Vagina (tissue), 2 donors: ENCODE measurements at regions of chr11 and their contacts with region 1.

Region 1: GRCh38 chr11:115334932-115335788 is 169.1 kb downstream of the CADM1 start:
- DNase-seq: no peak
- H3K4me3 ChIP-seq: no peak overlapping the region
- H3K27ac ChIP-seq: no peak overlapping the region
- H3K4me1 ChIP-seq: no peaks in the 10 kb centered on the region
- H3K27me3 ChIP-seq: no peaks in the 10 kb centered on the region
- CTCF ChIP-seq: peak in 2 of 3 experiments; percentile 43 to 55
- POLR2A ChIP-seq: no peak

Region 2: DNA sequence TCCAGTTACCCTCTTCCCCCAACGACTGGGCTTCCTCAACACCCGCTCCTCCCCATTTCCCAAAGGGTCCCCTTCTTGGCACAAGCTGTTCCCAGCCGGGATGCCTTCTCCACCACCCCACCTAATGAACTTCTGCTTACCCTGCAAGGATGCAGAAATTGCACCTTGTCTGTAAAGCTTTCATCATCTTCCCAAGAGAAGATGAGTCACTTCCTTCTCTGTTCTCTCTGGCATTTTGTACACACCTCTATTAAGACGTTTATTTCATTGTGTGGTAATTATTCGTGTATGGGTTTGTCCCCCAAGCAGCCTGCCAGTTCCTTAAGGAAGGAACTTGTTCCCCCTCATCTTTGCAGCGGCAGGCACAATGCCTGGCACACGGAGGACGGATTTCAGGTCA is 182.0 kb before region 1 on chr11:
- intact Hi-C with region 1: no loop called
- DNase-seq: no peak
- H3K4me3 ChIP-seq: no peak overlapping the region
- H3K27ac ChIP-seq: no peak overlapping the region
- H3K4me1 ChIP-seq: no peaks in the 10 kb centered on the region
- H3K27me3 ChIP-seq: no peaks in the 10 kb centered on the region
- CTCF ChIP-seq: no peak
- POLR2A ChIP-seq: no peak

Region 3: DNA sequence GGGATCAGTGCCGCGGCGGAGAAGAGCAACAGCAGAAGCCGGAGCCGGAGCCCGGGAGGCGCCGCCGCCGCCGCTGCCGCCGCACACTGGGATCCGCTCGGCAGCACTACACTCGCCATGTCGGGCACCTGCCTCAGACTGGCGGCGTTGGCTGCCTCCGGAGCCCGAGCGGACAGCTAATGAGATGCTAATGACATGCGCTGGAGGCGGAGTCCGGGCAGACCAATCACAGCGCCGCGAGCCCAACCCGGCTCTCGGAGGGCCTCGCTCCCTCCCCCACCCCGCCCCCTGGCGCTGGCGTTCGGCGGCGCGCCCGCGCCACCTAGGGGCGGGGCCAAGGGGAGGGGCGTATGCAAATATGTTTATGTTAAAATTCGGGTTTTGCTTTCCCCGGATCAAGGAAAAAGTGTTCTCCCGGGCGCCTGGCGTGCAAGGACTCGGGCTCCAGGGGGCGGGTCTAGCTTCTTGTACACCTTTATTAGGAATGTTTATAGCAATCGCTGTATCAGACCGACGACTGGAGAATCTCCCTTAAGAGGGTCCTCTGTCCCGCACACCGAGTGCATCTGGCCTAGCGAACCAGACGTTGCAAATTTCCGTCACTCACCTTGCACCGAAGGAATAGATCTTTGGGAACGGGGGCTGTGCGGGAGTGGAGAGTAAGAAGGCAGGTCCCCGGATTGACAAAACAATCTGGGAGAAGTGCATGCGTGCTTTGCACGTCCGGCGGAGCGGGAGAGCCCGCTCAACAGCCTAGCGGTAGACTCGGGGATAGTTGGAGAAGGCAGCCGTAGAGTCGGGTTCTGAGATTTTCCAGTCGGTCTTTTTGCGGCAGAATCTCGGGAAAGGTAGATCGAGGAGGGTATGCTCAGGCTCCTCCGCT is 169.4 kb after region 1 on chr11 and contains the start of gene CADM1:
- intact Hi-C with region 1: loop called (anchors 5 kb)
- DNase-seq: peak in 1 of 2 donors; percentile 91
- H3K4me3 ChIP-seq: peak within 1 kb of the TSS; percentile 50 to 59
- H3K27ac ChIP-seq: peak within 1 kb of the TSS; percentile 54
- H3K4me1 ChIP-seq: peaks cover 34% of the 10 kb centered on the region
- H3K27me3 ChIP-seq: no peaks in the 10 kb centered on the region
- CTCF ChIP-seq: peak in 2 of 3 experiments; percentile 18 to 40
- POLR2A ChIP-seq: peak in 1 of 2 donors; percentile 78
- total RNA-seq, gene CADM1: 37.1 TPM

Region 4: DNA sequence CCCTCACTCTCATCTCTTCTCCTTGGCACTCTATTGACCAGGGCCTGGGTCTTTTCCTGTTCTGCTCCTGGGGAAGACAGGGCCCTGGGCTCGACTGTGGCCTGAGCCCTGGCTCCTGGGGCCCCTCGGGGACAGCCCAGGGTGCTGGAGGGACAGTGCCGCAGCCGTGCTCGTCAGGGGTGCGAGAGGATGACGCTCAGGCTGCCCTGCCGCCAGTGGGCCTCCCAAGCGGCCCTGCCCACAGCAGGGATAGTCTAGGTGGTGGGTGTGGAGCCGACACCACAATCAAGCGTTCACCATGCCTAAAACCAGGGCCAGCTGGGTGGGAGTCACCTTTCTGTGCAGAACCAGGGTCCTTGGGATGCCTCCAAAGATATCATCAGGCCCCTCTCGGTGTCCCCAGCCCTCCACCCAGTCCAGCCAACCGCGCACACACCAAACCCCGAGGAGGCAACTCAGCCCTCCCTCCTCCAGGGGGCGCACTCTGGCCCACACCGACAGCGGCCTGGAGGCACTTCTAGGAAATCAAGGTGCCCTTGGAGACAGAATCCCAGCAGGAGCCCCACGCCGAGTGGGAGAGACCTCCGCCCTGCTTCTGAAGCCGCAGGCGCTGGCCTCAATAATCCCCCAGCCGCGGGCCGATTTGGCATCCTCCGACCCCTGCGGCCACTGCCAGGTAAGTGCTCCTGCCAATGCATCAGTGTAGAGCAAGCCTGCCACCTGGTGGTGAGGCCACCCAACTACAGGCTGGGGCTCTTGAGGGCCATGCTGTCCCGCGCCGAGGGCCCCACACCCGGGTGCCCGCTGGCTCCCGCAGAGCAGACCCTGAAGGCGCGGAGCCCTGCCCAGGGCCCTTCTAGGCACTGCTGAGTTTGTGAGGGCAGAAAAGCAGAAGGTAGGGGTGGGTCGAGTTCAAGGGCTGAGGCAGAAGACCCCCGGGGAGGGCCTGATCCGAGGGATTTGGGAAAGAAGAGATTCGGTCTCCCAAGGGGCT is 941.2 kb after region 1 on chr11:
- intact Hi-C with region 1: loop called (anchors 5 kb)
- DNase-seq: no peak
- H3K4me3 ChIP-seq: peak overlapping the region in 1 of 2 donors; percentile 26
- H3K27ac ChIP-seq: no peak overlapping the region
- H3K4me1 ChIP-seq: no peaks in the 10 kb centered on the region
- H3K27me3 ChIP-seq: no peaks in the 10 kb centered on the region
- CTCF ChIP-seq: peak; percentile 39 to 95 (median 91)
- POLR2A ChIP-seq: no peak